IMR-90 (cell line): ENCODE measurements at regions of chr6 and their contacts with region 1.

Region 1: DNA sequence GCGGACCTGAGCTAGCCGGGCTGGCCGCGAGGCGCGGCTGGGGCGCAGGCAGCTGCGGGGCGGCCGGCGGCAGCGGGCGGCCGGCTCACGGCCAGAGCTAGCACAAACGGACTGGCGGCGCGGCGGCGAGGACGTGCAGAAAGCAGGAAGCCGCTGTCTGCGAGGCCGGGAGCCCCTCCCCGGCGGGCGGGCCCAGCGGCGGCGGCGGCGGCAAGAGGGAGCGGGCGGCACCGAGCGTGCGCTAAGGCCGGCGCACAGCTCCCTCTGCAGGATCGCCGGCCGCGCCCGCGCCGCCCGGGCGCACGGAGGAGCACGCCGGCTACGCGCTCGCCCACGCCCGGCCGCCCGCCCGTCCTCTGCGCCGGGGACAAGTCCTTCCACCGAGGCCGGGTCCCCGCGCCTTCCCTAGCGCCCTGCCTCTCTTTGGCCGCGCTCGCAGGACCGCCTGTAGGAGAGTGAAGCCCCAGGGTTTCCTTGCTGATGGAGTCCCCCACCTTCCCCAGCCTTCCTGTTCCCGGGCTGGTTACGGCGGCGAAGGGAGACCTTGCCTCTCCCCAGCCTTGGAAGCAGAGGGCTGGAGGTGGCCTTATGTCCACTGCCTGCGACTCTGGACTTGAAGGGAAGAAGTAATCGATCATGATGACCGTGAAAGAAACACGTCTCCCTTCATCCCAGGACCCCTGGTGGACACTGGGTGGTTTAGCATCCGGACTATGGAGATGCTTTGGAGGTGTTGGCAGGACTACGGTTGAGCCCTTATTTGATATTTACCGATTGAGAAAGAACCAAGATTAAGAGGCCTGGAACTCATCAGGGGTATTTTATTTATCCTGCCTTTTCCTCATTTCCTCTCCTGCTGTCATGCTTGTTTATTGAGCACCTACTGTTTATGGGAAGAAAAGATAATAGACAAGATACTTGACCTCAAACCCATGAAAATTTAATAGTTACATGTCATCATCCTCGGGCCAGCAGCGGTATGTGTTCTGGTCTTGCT is at the start of gene PREP:
- DNase-seq: peak; percentile 81
- ATAC-seq: peak; percentile 96
- H3K4me3 ChIP-seq: peak within 1 kb of the TSS; percentile 76
- H3K27ac ChIP-seq: peak within 1 kb of the TSS; percentile 84
- H3K4me1 ChIP-seq: no peaks in the 10 kb centered on the region; the same call in 1 of the 2 replicates
- H3K27me3 ChIP-seq: no peaks in the 10 kb centered on the region
- CTCF ChIP-seq: peak; percentile 68
- POLR2A ChIP-seq: peak; percentile 66
- RAD21 ChIP-seq: peak; percentile 50
- total RNA-seq, gene PREP: 21.0 and 22.8 TPM in 2 replicates

Region 2: GRCh38 chr6:105087571-105088211 is 315.5 kb before region 1 on chr6:
- CTCF ChIA-PET with region 1: interaction called, 6 read pairs
- POLR2A ChIA-PET with region 1: no interaction called
- dilution Hi-C with region 1: loop called (anchors 25 kb)
- in situ Hi-C with region 1: loop called (anchors 10 kb)
- intact Hi-C with region 1: loop called (anchors 1 kb)
- DNase-seq: peak; percentile 69
- ATAC-seq: peak; percentile 90
- H3K4me3 ChIP-seq: no peak overlapping the region
- H3K27ac ChIP-seq: no peak overlapping the region
- H3K4me1 ChIP-seq: no peaks in the 10 kb centered on the region
- H3K27me3 ChIP-seq: peaks cover 5% of the 10 kb centered on the region
- CTCF ChIP-seq: peak; percentile 91
- POLR2A ChIP-seq: no peak
- RAD21 ChIP-seq: peak; percentile 94

Region 3: GRCh38 chr6:105097288-105097687 is 305.9 kb before region 1 on chr6:
- CTCF ChIA-PET with region 1: no interaction called
- POLR2A ChIA-PET with region 1: no interaction called
- dilution Hi-C with region 1: loop called (anchors 25 kb)
- in situ Hi-C with region 1: loop called (anchors 10 kb)
- intact Hi-C with region 1: no loop called
- DNase-seq: no peak
- ATAC-seq: no peak
- H3K4me3 ChIP-seq: no peak overlapping the region
- H3K27ac ChIP-seq: no peak overlapping the region
- H3K4me1 ChIP-seq: no peaks in the 10 kb centered on the region
- H3K27me3 ChIP-seq: no peaks in the 10 kb centered on the region
- CTCF ChIP-seq: no peak
- POLR2A ChIP-seq: no peak
- RAD21 ChIP-seq: no peak

Region 4: DNA sequence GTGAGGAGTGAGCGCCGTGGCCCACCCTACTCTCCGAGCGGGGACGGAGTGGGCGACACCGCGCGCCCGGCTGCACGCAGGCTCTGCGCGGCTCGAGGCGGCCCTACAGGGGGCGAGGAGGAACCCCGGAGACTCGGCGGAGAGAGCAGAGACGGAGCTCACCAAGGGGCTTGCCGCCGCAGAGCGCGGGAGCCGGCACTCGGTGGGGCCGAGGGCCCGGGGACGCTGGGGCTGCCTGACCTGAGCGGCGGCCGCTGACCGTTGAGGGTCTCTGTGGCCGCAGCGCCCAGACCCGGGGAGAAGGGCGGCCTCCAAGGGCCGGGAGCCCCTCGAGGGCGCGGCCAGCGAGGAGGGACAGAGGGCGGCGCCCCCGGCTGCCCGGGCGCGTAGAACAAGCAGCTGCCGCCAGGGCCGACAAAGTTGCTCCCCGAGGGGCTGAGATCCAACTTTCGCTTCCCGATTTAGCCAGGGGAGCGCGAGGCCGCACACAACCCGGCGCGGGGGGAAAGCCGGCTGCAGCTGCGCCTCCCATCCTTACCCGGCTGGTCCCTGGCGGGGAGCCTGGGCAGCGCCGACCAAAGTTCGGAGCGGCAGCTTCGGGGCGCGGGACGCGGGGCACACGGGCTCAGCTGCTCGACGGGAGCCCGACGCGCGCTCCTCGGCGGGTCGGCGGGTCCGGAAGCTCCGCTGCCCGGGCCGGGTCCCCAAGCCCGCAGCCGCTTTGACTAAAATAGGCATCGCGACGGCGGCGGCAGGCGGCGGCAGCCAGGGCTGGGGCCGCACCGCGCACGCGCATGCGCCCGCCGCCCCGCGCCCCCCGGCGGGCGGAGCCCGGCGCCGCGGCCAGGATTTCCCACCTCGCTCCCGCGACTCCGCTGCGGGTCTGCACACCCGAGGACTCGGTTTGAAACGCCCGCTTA is 266.5 kb before region 1 on chr6:
- CTCF ChIA-PET with region 1: interaction called, 3 read pairs
- POLR2A ChIA-PET with region 1: no interaction called
- dilution Hi-C with region 1: no loop called
- in situ Hi-C with region 1: no loop called
- intact Hi-C with region 1: loop called (anchors 2 kb)
- DNase-seq: peak; percentile 59
- ATAC-seq: peak; percentile 80
- H3K4me3 ChIP-seq: peak overlapping the region; percentile 86
- H3K27ac ChIP-seq: peak overlapping the region; percentile 42
- H3K4me1 ChIP-seq: no peaks in the 10 kb centered on the region
- H3K27me3 ChIP-seq: no peaks in the 10 kb centered on the region
- CTCF ChIP-seq: peak; percentile 29; the same call in 1 of the 2 replicates
- POLR2A ChIP-seq: no peak
- RAD21 ChIP-seq: no peak; the same call in none of the 2 replicates